A549 (cell line): ENCODE measurements at regions of chr18 and their contacts with region 1.

Region 1: DNA sequence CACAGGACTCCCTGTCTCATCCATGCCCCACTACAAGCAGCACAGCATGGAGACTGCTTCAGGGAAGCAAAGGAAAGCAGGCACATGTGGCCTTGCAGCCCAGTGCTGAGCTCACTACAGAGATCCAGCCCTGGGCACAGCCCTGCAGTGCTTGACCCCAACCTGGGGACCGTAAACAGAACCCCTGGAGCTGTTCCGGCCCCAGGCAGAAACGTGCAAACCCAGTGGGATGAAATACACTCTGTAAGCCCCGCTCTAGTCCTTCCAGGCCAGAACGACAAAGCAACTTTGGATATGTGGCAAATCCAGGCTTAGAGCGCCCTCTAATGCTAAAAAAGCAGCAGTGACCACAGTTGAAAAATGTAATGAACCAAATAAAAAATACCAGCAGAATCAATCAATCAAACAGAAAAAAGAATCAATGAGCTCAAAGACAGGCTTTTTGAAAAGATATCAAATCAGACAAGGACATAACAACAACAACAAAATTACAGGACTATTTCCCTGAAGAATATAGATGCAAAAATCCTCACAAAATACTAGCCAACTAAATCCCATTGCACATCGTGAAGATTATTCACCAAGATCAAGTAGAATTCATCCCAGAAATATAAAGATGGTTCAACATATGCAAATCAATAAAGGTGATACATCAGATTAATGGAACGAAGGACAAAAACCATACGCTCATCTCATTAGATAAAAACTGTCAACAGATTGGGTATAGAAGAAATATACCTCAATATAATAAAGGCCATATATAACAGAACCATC is 45.6 kb downstream of the ZNF519 start:
- DNase-seq: peak; percentile 2 to 16
- ATAC-seq: peak in 1 of 2 experiments; percentile 58; a peak in 3 of 6 replicates
- H3K4me3 ChIP-seq: no peak overlapping the region
- H3K27ac ChIP-seq: no peak overlapping the region
- H3K4me1 ChIP-seq: no peaks in the 10 kb centered on the region
- CTCF ChIP-seq: peak; percentile 45
- EP300 ChIP-seq: no peak
- POLR2A ChIP-seq: no peak
- RAD21 ChIP-seq: peak; percentile 60 to 64

Region 2: GRCh38 chr18:13813271-13813849 is 273.3 kb before region 1 on chr18:
- CTCF ChIA-PET with region 1: interaction called, 14 read pairs
- POLR2A ChIA-PET with region 1: no interaction called
- DNase-seq: peak; percentile 41 to 53
- ATAC-seq: peak; percentile 70 to 90; a peak in 3 of 6 replicates
- H3K4me3 ChIP-seq: no peak overlapping the region
- H3K27ac ChIP-seq: no peak overlapping the region
- H3K4me1 ChIP-seq: no peaks in the 10 kb centered on the region
- CTCF ChIP-seq: peak; percentile 43; the same call in 2 of the 3 replicates
- EP300 ChIP-seq: no peak
- POLR2A ChIP-seq: no peak
- RAD21 ChIP-seq: peak; percentile 51 to 57; a peak in 4 of 5 replicates

Region 3: GRCh38 chr18:13823707-13824395 is 262.8 kb before region 1 on chr18 and contains the start of gene MC5R:
- CTCF ChIA-PET with region 1: interaction called, 12 read pairs
- POLR2A ChIA-PET with region 1: no interaction called
- DNase-seq: peak; percentile 21 to 33
- ATAC-seq: peak; percentile 87 to 96
- H3K4me3 ChIP-seq: peak within 1 kb of the TSS; percentile 38
- H3K27ac ChIP-seq: no peak within 1 kb of the TSS
- H3K4me1 ChIP-seq: no peaks in the 10 kb centered on the region
- CTCF ChIP-seq: peak; percentile 57
- EP300 ChIP-seq: no peak
- POLR2A ChIP-seq: no peak
- RAD21 ChIP-seq: peak; percentile 56 to 81
- polyA plus RNA-seq, gene MC5R: not detected in 2 replicates

Region 4: GRCh38 chr18:13831864-13832508 is 254.7 kb before region 1 on chr18:
- CTCF ChIA-PET with region 1: interaction called, 10 read pairs
- POLR2A ChIA-PET with region 1: no interaction called
- DNase-seq: peak in 1 of 2 experiments; percentile 18
- ATAC-seq: peak in 1 of 2 experiments; percentile 51; a peak in 2 of 6 replicates
- H3K4me3 ChIP-seq: no peak overlapping the region
- H3K27ac ChIP-seq: no peak overlapping the region
- H3K4me1 ChIP-seq: no peaks in the 10 kb centered on the region
- CTCF ChIP-seq: no peak; the same call in 2 of the 3 replicates
- EP300 ChIP-seq: no peak
- POLR2A ChIP-seq: no peak
- RAD21 ChIP-seq: no peak

Region 5: DNA sequence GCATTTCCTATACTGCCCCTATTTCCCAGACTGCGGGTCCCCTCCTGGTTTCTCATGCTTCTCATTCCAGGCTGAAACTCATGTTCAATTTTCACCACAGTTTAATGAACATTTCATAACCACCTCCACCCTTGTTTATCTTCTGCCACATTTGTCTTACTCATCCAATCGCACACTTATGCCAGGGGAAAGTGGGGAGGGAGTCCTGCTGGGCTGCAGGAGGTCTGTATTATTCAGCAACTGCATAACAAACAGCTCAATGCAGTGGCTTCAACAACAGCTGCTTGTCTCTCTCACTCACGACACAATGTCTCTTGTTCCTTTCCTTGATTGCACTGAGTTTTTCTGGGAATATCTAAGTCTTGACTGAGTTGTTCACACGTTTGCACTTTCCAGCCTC is 60.4 kb before region 1 on chr18:
- CTCF ChIA-PET with region 1: no interaction called
- POLR2A ChIA-PET with region 1: no interaction called
- DNase-seq: no peak
- ATAC-seq: no peak
- H3K4me3 ChIP-seq: no peak overlapping the region
- H3K27ac ChIP-seq: no peak overlapping the region
- H3K4me1 ChIP-seq: no peaks in the 10 kb centered on the region
- CTCF ChIP-seq: no peak
- EP300 ChIP-seq: no peak
- POLR2A ChIP-seq: no peak
- RAD21 ChIP-seq: no peak

Region 6: DNA sequence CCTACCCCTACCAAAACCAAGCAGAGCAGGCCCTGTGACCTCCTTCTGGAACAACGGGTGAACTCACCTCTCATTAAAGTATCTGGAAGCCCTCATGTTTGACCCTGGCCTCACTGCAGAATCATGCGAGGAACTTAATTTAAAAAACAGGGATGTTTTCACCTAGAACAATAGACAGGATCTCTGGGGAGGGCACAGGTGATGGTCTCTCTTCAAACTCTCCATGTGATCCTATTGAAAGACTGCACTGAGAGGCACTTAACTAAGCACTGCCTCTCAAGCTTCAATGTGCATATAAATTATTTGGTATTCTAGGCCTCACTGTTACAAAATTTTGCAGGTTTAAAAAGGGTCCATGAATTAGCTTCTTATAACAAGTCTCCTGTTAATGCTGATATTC is 38.0 kb after region 1 on chr18:
- CTCF ChIA-PET with region 1: no interaction called
- POLR2A ChIA-PET with region 1: no interaction called
- DNase-seq: no peak
- ATAC-seq: no peak
- H3K4me3 ChIP-seq: no peak overlapping the region
- H3K27ac ChIP-seq: no peak overlapping the region
- H3K4me1 ChIP-seq: no peaks in the 10 kb centered on the region
- CTCF ChIP-seq: no peak
- EP300 ChIP-seq: no peak
- POLR2A ChIP-seq: no peak
- RAD21 ChIP-seq: no peak